ENCODE measurements at regions of chr12 and their contacts with region 1.

Region 1: GRCh38 chr12:48029491-48030172 is 25.4 kb upstream of the COL2A1 start:
- DNase-seq: no peak
- H3K4me3 ChIP-seq: no peak overlapping the region
- H3K27ac ChIP-seq: no peak overlapping the region
- H3K4me1 ChIP-seq: peaks cover 6% of the 10 kb centered on the region; the same call in 1 of the 2 replicates
- H3K27me3 ChIP-seq: 0 out of 2 replicates have a peak, but pooled peaks cover 11% of the 10 kb centered on the region
- CTCF ChIP-seq: no peak

Region 2: GRCh38 chr12:47602325-47602724 is 427.3 kb before region 1 on chr12:
- CTCF ChIA-PET with region 1: no interaction called
- POLR2A ChIA-PET with region 1: no interaction called
- intact Hi-C with region 1: no loop called
- DNase-seq: no peak
- H3K4me3 ChIP-seq: no peak overlapping the region
- H3K27ac ChIP-seq: no peak overlapping the region
- H3K4me1 ChIP-seq: no peaks in the 10 kb centered on the region
- H3K27me3 ChIP-seq: no peaks in the 10 kb centered on the region
- CTCF ChIP-seq: no peak

Region 3: GRCh38 chr12:47705566-47706425 is 323.8 kb before region 1 on chr12 and contains the start of gene RPAP3:
- CTCF ChIA-PET with region 1: no interaction called
- POLR2A ChIA-PET with region 1: no interaction called
- intact Hi-C with region 1: loop called (anchors 5 kb)
- DNase-seq: peak; percentile 91 to 95
- H3K4me3 ChIP-seq: peak within 1 kb of the TSS; percentile 63
- H3K27ac ChIP-seq: peak within 1 kb of the TSS; percentile 79
- H3K4me1 ChIP-seq: peaks cover 19% of the 10 kb centered on the region
- H3K27me3 ChIP-seq: no peaks in the 10 kb centered on the region
- CTCF ChIP-seq: peak; percentile 71
- total RNA-seq, gene RPAP3: 31.6 and 37.0 TPM in 2 replicates

Region 4: GRCh38 chr12:47715877-47716548 is 313.6 kb before region 1 on chr12:
- CTCF ChIA-PET with region 1: no interaction called
- POLR2A ChIA-PET with region 1: no interaction called
- intact Hi-C with region 1: no loop called
- DNase-seq: no peak
- H3K4me3 ChIP-seq: no peak overlapping the region
- H3K27ac ChIP-seq: no peak overlapping the region
- H3K4me1 ChIP-seq: no peaks in the 10 kb centered on the region
- H3K27me3 ChIP-seq: no peaks in the 10 kb centered on the region
- CTCF ChIP-seq: no peak

Region 5: DNA sequence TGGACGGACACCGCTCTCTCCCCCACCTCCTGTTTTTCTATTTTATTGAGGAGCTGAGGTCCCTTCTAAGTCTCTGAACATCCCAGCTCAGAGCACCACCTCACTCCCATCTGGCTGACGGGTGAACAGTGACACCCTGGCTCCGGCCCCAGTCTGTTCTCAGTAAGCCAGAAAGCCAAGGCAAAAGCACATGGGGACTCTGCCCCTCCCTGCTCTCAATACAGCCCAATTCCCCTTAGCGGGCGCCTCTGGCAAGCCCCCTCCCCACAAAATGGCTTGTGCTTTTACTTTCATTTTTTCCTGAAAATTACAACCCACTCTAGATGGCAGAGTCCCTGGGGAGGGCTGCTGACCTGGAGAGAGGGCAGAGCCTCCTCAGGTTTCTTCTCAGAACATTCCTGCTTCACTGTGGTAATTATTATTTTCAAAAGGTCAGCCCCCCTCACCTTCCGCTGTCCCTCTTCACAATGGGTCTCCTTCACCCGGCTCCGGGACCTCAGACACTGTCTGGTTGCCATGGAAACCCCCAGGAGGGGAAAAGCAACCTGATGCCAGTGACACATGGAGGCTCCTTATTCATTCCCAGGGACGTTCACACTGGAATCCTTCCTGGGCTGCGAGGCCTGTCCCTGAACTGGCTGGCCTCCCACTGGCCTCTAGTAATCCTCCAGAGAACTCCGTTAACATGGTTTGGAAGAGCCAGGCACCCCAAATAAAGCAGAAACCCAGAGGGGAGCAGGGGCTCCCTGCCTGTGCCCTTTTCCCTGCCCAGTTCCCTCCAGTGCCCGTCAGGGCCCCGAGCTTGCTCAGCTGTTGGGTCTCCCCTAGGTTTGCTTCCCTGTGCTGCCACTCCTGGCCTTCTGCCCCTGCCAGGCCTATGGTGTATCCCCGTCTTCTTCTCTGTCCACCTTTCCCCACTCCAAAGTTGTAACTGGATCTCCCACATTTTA is 41.3 kb before region 1 on chr12:
- CTCF ChIA-PET with region 1: no interaction called
- POLR2A ChIA-PET with region 1: no interaction called
- intact Hi-C with region 1: no loop called
- DNase-seq: no peak
- H3K4me3 ChIP-seq: no peak overlapping the region
- H3K27ac ChIP-seq: no peak overlapping the region
- H3K4me1 ChIP-seq: no peaks in the 10 kb centered on the region
- H3K27me3 ChIP-seq: peaks cover 67% of the 10 kb centered on the region
- CTCF ChIP-seq: no peak

Region 6: GRCh38 chr12:48069241-48069640 is 39.6 kb after region 1 on chr12:
- CTCF ChIA-PET with region 1: interaction called, 25 read pairs
- POLR2A ChIA-PET with region 1: no interaction called
- intact Hi-C with region 1: no loop called
- DNase-seq: no peak
- H3K4me3 ChIP-seq: no peak overlapping the region
- H3K27ac ChIP-seq: no peak overlapping the region
- H3K4me1 ChIP-seq: no peaks in the 10 kb centered on the region
- H3K27me3 ChIP-seq: no peaks in the 10 kb centered on the region
- CTCF ChIP-seq: no peak

Measured in PC-9 (cell line).